Caco-2 (cell line): ENCODE measurements at regions of chr18 and their contacts with region 1.

Region 1: GRCh38 chr18:12236934-12237832 is 17.0 kb upstream of the CIDEA start:
- DNase-seq: peak; percentile 74 to 87
- H3K4me3 ChIP-seq: no peak overlapping the region
- H3K4me3 Mint-ChIP-seq: no peak overlapping the region
- H3K27ac Mint-ChIP-seq: no peak overlapping the region
- H3K4me1 ChIP-seq: no peaks in the 10 kb centered on the region
- H3K4me1 Mint-ChIP-seq: no peaks in the 10 kb centered on the region
- H3K27me3 ChIP-seq: no peaks in the 10 kb centered on the region
- H3K27me3 Mint-ChIP-seq: peaks cover 13% of the 10 kb centered on the region
- CTCF ChIP-seq: peak; percentile 92 to 95

Region 2: GRCh38 chr18:12076424-12077140 is 160.6 kb before region 1 on chr18:
- CTCF ChIA-PET with region 1: interaction called, 6 read pairs
- POLR2A ChIA-PET with region 1: no interaction called
- intact Hi-C with region 1: loop called (anchors 1 kb)
- DNase-seq: peak in 1 of 2 experiments; percentile 72
- H3K4me3 ChIP-seq: peak overlapping the region; percentile 34
- H3K4me3 Mint-ChIP-seq: peak overlapping the region; percentile 57
- H3K27ac Mint-ChIP-seq: no peak overlapping the region
- H3K4me1 ChIP-seq: no peaks in the 10 kb centered on the region
- H3K4me1 Mint-ChIP-seq: no peaks in the 10 kb centered on the region
- H3K27me3 ChIP-seq: no peaks in the 10 kb centered on the region
- H3K27me3 Mint-ChIP-seq: peaks cover 11% of the 10 kb centered on the region
- CTCF ChIP-seq: no peak

Region 3: DNA sequence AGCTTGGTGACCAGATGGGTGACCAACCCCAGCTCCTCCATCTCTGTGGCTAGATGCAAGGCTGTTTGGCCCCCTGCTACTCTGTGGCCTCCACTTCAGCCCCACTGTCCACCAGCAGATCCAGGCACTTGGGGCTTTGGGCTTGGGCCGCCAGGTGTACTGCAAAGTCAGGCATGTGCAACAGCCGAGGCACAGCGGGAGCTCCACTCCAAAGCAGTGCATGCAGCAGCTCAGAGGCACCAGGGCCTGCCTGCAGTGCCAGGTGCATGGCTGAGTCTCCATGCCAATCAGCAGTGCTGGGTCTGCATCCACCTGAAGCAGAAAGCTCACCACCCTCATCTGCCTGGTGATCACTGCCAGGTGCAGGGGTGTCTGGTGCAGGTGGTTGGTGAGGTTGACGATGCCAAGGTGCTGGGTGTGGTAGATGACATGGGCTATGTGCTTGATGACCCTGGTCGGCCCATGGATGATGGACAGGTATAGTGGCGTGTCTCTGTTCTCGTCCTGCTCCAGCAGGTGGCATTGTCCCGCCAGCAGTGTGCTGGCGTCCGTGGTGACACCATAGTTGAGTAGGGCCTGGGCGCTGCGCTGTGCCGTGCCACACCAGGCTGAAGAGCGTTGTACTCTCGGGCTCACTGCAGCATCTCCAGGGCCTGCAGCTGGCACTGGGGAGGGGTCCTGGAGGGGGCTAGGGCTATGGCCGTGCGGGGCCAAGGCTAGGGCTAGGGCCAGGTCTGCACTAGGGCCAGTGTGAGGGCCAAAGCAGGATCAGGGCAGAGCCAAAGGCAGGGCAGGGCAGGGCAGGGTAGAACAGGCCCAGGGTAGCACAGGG is 144.6 kb before region 1 on chr18:
- CTCF ChIA-PET with region 1: interaction called, 7 read pairs
- POLR2A ChIA-PET with region 1: no interaction called
- intact Hi-C with region 1: loop called (anchors 1 kb)
- DNase-seq: peak; percentile 68 to 70
- H3K4me3 ChIP-seq: no peak overlapping the region
- H3K4me3 Mint-ChIP-seq: no peak overlapping the region
- H3K27ac Mint-ChIP-seq: no peak overlapping the region
- H3K4me1 ChIP-seq: no peaks in the 10 kb centered on the region
- H3K4me1 Mint-ChIP-seq: no peaks in the 10 kb centered on the region
- H3K27me3 ChIP-seq: no peaks in the 10 kb centered on the region
- H3K27me3 Mint-ChIP-seq: peaks cover 3% of the 10 kb centered on the region
- CTCF ChIP-seq: peak; percentile 68 to 84

Region 4: DNA sequence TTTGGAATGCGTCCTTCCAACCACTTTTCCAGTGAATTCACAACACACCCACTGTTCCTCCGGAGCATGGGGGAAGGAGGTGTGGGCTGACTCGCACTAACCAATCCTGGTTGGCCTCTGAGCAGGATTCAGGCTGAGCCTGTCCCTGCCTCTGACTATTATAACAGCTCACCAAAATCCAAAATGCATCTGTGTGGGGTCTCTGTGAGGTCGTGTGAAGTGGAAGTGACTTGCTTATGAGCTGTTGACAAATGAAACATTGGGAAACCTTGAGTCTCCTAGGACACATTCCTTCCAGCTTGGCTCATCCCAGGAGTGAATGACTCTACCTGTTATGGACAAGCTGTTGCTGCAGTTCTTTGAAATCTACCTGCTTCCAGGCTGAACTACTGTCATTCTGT is 18.4 kb after region 1 on chr18:
- CTCF ChIA-PET with region 1: interaction called, 4 read pairs
- POLR2A ChIA-PET with region 1: no interaction called
- intact Hi-C with region 1: loop called (anchors 1 kb)
- DNase-seq: peak in 1 of 2 experiments; percentile 47
- H3K4me3 ChIP-seq: no peak overlapping the region
- H3K4me3 Mint-ChIP-seq: no peak overlapping the region
- H3K27ac Mint-ChIP-seq: peak overlapping the region; percentile 14
- H3K4me1 ChIP-seq: peaks cover 17% of the 10 kb centered on the region
- H3K4me1 Mint-ChIP-seq: no peaks in the 10 kb centered on the region
- H3K27me3 ChIP-seq: no peaks in the 10 kb centered on the region
- H3K27me3 Mint-ChIP-seq: no peaks in the 10 kb centered on the region
- CTCF ChIP-seq: no peak

Region 5: DNA sequence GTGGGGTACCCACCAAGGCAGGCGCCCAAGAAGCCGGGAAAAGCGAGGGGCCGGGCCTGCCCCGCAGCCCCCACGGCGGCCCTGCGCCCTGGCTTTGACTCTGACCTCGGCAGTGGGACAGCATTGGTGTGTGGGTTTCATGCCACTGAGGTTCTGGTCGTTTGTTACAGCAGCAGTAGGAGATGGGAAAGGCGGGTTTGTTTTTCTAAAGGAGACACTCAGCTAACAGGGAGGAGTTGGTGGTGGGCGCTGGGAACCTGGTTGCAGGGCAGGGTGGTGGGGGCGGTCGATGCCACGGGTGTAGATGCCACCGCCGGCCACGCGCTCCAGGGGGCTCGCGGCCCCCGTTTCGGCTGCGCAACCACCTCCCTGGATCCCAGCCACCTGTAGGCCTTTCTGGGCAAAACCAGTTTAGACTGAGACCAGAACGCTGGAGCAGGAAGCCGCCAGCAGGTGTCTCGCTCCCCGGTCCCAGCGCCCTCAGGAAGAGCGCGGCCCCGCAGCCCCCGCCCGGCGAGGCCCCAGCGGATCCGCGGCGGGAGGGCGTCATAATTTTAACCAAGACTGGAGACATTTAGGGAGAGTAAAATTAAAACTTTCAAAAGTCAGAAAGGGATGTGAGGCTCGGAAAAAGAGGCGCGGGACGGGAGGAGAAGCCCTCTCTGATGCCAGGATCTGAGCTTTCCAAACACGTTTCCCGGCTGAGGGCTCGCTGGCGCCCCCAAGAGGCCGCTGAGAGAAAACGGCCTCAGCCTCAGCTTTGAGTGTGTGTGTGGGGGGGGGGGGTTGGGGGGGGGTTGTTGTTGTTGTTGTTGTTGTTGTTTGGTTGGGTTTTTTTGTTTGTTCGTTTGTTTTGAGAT is 34.4 kb after region 1 on chr18:
- CTCF ChIA-PET with region 1: interaction called, 10 read pairs
- POLR2A ChIA-PET with region 1: no interaction called
- intact Hi-C with region 1: no loop called
- DNase-seq: peak; percentile 81 to 88
- H3K4me3 ChIP-seq: peak overlapping the region; percentile 44
- H3K4me3 Mint-ChIP-seq: peak overlapping the region; percentile 79
- H3K27ac Mint-ChIP-seq: peak overlapping the region; percentile 56
- H3K4me1 ChIP-seq: no peaks in the 10 kb centered on the region
- H3K4me1 Mint-ChIP-seq: no peaks in the 10 kb centered on the region
- H3K27me3 ChIP-seq: no peaks in the 10 kb centered on the region
- H3K27me3 Mint-ChIP-seq: no peaks in the 10 kb centered on the region
- CTCF ChIP-seq: peak; percentile 80 to 84